PC-9 (cell line): ENCODE measurements at regions of chr22 and their contacts with region 1.

Region 1: DNA sequence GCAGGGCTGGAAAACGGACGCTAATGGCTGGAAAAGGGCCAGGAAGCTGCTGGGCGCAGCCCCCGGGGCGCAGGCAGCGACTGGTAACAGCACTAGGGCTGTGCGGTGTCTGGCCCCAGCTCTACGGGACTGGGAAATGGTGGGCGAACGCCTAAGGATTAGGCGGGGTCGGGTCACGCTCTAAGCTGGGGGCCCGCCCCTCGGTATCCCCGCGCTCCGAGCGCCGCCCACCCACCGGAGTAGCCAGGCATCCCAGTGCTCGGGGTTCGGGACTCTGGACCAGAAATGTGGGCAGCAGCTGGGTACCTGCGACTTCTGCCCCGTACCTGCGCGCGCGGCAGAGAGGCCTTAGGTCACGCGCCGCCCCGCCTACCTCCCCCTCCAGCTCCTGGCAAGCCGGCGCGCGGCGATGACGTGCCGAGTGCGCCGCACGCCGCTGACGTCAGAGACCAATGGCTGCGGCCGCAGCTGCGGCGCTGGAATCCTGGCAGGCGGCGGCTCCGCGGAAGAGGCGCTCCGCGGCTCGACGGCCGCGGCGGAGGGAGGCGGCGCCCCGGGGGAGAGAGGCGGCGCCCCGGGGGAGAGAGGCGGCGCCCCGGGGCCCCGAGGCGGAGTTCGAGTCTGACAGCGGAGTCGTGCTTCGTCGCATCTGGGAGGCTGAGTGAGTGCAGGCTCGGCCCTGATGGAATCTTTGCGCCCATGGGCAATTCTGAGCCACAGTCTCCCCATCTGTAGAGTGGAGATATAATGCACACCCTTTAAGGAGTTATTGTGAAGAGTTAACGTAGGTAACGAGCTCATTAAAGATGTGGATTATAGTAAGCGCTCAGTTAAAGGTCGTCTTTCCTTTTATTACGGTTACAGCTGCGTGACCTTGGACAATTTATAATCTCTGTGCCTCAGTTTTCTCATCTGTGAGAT is at the starts of genes HPS4 and SRRD:
- DNase-seq: peak; percentile 72 to 79
- H3K4me3 ChIP-seq: peak within 1 kb of the TSS; percentile 81
- H3K27ac ChIP-seq: peak within 1 kb of the TSS; percentile 63
- H3K4me1 ChIP-seq: peaks cover 23% of the 10 kb centered on the region
- H3K27me3 ChIP-seq: no peaks in the 10 kb centered on the region
- CTCF ChIP-seq: no peak
- total RNA-seq, gene HPS4: 21.2 and 33.1 TPM in 2 replicates
- total RNA-seq, gene SRRD: 7.1 and 9.5 TPM in 2 replicates

Region 2: GRCh38 chr22:27186643-27187042 is 702.9 kb after region 1 on chr22:
- CTCF ChIA-PET with region 1: interaction called, 15 read pairs
- POLR2A ChIA-PET with region 1: no interaction called
- intact Hi-C with region 1: no loop called
- DNase-seq: no peak
- H3K4me3 ChIP-seq: no peak overlapping the region
- H3K27ac ChIP-seq: no peak overlapping the region
- H3K4me1 ChIP-seq: no peaks in the 10 kb centered on the region
- H3K27me3 ChIP-seq: no peaks in the 10 kb centered on the region
- CTCF ChIP-seq: no peak